Activated T-helper 2 cell treated with anti-CD3 and anti-CD28 coated beads, Interferon-gamma antibody, Interleukin-2, Interleukin-4, amounts not matched to agents 10 μg/mL and 5 μg/mL and 100 μg/mL, durations not matched to agents 14 hours and 24 hours and 36 hours (primary cell): ENCODE measurements at regions of chr5 and their contacts with region 1.

Region 1: DNA sequence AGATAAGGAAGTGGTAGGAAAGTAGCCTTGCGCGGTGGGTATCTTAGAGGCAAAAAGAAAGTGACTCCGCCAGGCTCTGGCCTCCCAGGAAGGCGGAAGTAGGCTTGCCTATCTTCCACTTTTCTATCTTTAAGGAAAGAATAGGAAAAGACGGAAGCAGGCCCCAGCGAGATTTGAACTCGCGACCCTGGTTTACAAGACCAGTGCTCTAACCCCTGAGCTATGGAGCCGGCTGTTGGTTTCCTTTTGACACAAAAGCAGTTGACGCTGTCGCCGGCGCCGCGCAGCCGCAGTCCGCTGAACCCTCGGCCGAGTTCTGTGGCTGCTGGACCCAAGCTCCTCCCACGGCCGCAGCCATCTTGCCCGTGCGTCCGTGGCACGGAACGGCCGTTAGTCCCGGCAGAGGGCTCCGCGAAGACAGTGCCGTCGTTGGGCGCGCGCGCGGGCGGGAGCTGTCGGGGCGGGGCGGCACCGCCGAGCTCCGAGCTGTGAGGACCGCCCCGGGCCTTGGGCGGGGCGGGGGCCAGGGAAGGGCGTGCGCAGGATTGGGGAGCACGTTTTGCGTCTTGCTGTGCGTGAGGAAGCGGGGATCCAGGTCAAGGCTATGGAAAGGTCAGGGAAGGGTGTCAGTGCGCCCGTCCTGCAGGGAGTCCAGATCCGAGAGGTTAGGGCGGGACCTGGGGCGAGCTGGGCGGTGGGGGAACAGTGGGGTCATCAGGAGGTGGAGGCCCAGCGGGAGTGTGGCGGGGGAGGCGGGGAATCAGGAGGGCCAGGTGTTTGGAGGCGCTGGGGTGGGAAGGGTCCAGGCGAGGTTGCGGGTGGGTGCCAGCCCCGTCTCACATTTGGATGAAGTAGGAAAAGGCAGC is 13.2 kb downstream of the TRIM7 start:
- DNase-seq: peak; percentile 94
- H3K4me3 Mint-ChIP-seq: peak overlapping the region; percentile 94
- H3K27ac Mint-ChIP-seq: peak overlapping the region; percentile 95
- H3K4me1 Mint-ChIP-seq: peaks cover 14% of the 10 kb centered on the region
- H3K27me3 Mint-ChIP-seq: no peaks in the 10 kb centered on the region

Region 2: DNA sequence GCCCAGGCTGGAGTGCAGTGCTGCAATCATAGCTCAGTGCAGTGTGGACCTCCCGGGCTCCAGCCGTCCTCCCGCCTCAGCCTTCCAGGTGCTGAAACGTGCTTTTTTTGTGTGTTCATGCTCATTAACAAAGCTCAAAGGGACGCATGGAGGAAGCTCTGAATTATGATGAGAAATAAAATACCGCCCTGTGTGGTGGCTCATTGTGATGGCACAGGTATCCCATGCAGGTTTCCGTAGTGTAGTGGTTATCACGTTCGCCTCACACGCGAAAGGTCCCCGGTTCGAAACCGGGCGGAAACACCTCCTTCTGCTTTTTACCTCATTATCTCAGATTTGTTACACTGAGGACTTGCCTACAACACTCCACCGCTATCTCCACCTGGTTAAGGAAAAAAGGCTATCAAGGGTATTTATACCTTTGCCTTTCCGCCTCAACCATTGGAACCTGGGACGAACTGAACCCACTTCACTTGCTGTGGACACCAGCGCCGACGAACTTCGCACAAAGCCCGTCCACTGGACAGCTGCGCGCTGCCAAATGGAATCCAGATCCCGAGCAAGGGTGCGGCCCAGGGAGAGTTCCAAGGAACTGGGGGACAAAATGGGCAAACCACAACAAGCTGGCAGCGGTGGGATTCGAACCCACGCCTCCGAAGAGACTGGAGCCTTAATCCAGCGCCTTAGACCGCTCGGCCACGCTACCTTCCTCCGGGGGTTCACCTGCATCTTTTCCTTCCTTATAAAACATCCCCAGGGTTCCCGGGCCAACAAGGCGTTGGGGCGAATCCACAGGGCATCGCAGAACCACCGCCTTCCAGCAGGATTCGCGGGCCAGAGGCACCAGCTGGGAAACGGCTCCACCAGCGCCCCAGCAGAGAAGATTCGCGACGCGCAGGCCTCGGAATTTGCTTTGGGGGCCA is 18.1 kb before region 1 on chr5:
- intact Hi-C with region 1: loop called (anchors 2 kb)
- DNase-seq: peak; percentile 71
- H3K4me3 Mint-ChIP-seq: peak overlapping the region; percentile 87
- H3K27ac Mint-ChIP-seq: peak overlapping the region; percentile 92
- H3K4me1 Mint-ChIP-seq: peaks cover 34% of the 10 kb centered on the region
- H3K27me3 Mint-ChIP-seq: peaks cover 28% of the 10 kb centered on the region

Region 3: GRCh38 chr5:181207214-181208107 is 15.7 kb after region 1 on chr5:
- intact Hi-C with region 1: loop called (anchors 1 kb)
- DNase-seq: peak; percentile 74
- H3K4me3 Mint-ChIP-seq: peak overlapping the region; percentile 90
- H3K27ac Mint-ChIP-seq: peak overlapping the region; percentile 92
- H3K4me1 Mint-ChIP-seq: peaks cover 31% of the 10 kb centered on the region
- H3K27me3 Mint-ChIP-seq: peaks cover 24% of the 10 kb centered on the region

Region 4: GRCh38 chr5:181217111-181217802 is 25.5 kb after region 1 on chr5:
- intact Hi-C with region 1: loop called (anchors 1 kb)
- DNase-seq: peak; percentile 57
- H3K4me3 Mint-ChIP-seq: peak overlapping the region; percentile 88
- H3K27ac Mint-ChIP-seq: peak overlapping the region; percentile 91
- H3K4me1 Mint-ChIP-seq: peaks cover 43% of the 10 kb centered on the region
- H3K27me3 Mint-ChIP-seq: peaks cover 4% of the 10 kb centered on the region

Region 5: GRCh38 chr5:181223058-181223728 is 31.4 kb after region 1 on chr5 and contains the start of gene TRIM41:
- intact Hi-C with region 1: loop called (anchors 1 kb)
- DNase-seq: peak; percentile 96
- H3K4me3 Mint-ChIP-seq: peak within 1 kb of the TSS; percentile 97
- H3K27ac Mint-ChIP-seq: peak within 1 kb of the TSS; percentile 98
- H3K4me1 Mint-ChIP-seq: peaks cover 55% of the 10 kb centered on the region
- H3K27me3 Mint-ChIP-seq: peaks cover 2% of the 10 kb centered on the region
- total RNA-seq, gene TRIM41: 32.2 and 33.0 TPM in 2 replicates

Region 6: DNA sequence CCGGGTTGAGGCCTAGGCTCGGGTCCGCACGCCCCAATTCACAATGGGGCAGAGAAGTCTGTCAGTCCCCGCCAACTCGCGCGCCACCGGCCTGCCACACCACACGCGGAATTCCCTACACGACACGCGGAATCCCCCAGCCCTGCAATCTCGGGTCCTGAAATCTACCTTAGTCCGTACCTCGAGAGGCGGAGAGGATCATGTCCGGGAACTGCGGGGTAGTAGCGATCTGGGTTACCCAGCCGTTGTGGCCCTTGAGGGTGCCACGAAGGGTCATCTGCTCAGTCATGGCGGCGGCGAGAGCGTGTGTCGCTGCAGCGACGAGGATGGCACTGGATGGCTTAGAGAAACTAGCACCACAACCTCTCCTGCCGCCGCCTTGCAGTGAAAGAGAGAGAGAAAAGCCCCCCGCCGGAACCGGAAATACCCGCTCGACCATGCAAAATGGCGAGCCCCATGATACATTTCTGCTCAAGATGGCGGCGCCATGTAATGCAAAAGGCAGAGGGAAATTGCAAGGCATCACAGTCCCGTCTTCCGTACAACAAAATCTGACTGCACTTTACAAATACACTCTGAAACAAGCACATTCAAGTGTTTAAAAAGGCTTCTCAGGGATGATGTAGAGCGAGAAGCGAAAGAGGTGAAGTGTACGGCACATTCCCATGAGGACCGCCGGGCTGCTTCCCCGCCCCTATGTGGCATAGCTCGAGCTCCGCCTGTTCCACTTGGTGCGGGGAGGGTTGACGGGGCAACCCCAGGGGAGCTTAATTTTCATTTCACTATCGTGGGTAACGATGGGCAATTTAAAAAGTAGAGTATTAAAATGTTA is 52.0 kb after region 1 on chr5 and contains the start of gene RACK1:
- intact Hi-C with region 1: loop called (anchors 1 kb)
- DNase-seq: peak; percentile 85
- H3K4me3 Mint-ChIP-seq: peak within 1 kb of the TSS; percentile 98
- H3K27ac Mint-ChIP-seq: peak within 1 kb of the TSS; percentile 99
- H3K4me1 Mint-ChIP-seq: peaks cover 39% of the 10 kb centered on the region
- H3K27me3 Mint-ChIP-seq: no peaks in the 10 kb centered on the region
- total RNA-seq, gene RACK1: 2,110 and 2,123 TPM in 2 replicates

Region 7: DNA sequence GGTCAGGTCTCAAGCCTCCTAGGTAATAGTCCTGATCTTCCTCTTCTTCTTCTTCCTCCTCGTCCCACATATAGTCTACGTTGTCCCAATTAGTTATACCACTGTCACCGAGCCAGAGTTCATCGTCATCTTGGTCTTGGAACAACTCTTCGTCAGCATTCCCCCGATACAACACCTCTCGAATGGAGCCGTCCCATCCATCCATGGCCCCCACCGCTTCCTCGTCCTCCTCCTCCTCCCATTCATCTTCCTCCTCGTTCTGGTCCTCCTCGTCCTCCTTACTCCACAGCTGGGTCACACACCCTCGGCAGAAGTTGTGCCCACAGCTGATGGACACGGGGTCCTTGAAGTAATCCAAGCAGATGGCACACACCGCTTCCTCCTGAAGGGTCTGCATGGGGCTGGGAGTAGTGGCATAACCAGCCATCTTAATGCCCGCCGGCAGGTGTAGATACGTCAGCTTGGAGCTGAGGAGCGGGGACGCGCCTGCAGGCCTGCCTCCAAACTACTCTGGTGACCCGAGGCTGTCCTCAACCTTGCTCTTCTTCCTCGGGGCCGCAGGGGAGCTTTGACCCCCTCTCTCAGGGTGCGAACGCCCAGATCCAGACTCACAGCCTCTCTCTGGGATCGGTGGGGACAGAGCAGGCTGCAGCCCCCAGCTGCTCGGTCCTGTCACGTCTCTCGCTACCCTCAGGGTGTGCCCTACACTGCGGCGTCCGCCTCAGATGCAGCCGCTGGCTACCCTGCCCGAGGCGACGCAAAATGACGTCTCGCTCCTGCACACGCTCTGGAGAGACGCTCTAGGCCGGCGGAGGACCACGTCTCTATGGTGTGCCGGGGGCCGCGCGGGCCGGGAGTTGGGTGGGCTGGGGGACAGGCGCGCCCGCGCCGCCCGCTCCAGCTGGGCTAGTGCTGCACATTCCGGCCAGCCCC is 68.9 kb after region 1 on chr5 and contains the start of gene TRIM52:
- intact Hi-C with region 1: loop called (anchors 1 kb)
- DNase-seq: peak; percentile 88
- H3K4me3 Mint-ChIP-seq: peak within 1 kb of the TSS; percentile 99
- H3K27ac Mint-ChIP-seq: peak within 1 kb of the TSS; percentile 94
- H3K4me1 Mint-ChIP-seq: peaks cover 40% of the 10 kb centered on the region
- H3K27me3 Mint-ChIP-seq: no peaks in the 10 kb centered on the region
- total RNA-seq, gene TRIM52: 15.5 and 16.9 TPM in 2 replicates